ENCODE measurements at regions of chr17 and their contacts with region 1.

Region 1: GRCh38 chr17:68205251-68205807 is 42.5 kb upstream of the AMZ2 start:
- DNase-seq: peak; percentile 81 to 95 (median 92)
- ATAC-seq: peak; percentile 80 to 81
- H3K4me3 Mint-ChIP-seq: peak overlapping the region; percentile 78 to 95 (median 87)
- H3K27ac Mint-ChIP-seq: peak overlapping the region; percentile 43 to 97 (median 91)
- H3K4me1 Mint-ChIP-seq: peaks cover 11 to 43% (median 22%) of the 10 kb centered on the region in 4 donors
- H3K27me3 Mint-ChIP-seq: no peaks in the 10 kb centered on the region

Region 2: DNA sequence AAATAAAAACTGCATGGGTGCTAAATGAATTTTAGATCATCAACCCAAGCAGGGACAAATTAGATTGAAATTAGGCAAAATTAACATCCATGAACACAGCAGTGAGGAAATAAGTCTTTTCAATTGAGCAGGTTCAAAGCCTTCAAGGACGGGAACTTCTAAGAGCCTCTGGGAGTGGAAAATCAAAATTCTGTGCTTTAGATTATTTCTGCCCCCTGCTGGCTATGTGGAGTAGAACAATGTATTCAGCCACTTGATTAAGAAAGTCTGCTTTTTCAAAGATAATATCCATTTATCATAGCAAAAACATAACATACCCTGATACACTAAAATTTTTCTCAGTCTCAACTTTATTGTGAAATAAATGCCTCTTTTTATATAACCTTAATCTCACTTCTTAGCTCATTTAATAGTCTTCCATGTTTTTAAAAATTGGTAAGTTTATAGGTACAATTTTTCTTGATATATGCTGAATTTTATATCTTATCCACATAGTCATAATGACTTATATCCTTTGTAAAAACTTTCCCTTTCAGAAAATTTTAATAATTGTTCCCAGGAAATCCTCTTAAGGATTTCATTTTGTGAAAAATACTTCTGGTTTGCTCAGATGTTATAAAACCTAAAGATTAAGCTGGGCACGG is 515.7 kb before region 1 on chr17:
- POLR2A ChIA-PET with region 1: no interaction called
- DNase-seq: peak; percentile 7 to 69 (median 52)
- ATAC-seq: peak; percentile 66 to 68
- H3K4me3 Mint-ChIP-seq: no peak overlapping the region
- H3K27ac Mint-ChIP-seq: peak overlapping the region in 2 of 10 donors; percentile 21 to 80
- H3K4me1 Mint-ChIP-seq: peaks cover 0 to 7% (median 4%) of the 10 kb centered on the region in 4 donors
- H3K27me3 Mint-ChIP-seq: no peaks in the 10 kb centered on the region

Region 3: GRCh38 chr17:68133346-68134045 is 71.8 kb before region 1 on chr17:
- POLR2A ChIA-PET with region 1: no interaction called
- DNase-seq: no peak
- ATAC-seq: no peak
- H3K4me3 Mint-ChIP-seq: no peak overlapping the region
- H3K27ac Mint-ChIP-seq: peak overlapping the region in 3 of 10 donors; percentile 37 to 83 (median 52)
- H3K4me1 Mint-ChIP-seq: no peaks in the 10 kb centered on the region
- H3K27me3 Mint-ChIP-seq: peaks cover 0 to 2% (median 0%) of the 10 kb centered on the region in 5 donors

Region 4: DNA sequence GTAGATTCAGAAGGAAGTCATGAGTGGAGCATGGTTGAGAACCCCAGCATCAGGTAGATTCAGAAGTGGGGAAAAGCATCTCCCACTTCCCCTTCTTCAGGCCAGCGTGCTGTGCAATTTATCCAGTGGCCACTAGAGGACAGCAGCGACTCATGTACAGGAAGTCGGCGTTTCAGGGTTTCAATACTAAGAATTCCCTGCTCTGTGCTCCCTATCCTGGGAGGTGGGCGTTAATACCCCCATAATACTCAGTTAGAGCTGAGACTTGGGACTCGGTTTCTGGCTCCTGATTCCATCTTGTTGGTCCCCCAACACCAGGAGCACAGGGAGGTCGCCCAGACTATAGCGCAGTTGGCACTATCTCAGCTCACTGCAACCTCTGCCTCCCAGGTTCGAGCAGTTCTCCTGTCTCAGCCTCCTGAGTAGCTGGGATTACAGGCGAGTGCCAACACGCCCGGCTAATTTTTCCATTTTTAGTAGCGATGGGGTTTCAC is 32.8 kb before region 1 on chr17:
- POLR2A ChIA-PET with region 1: interaction called, 12 read pairs
- DNase-seq: peak; percentile 57 to 84 (median 70)
- ATAC-seq: peak; percentile 71 to 74
- H3K4me3 Mint-ChIP-seq: no peak overlapping the region
- H3K27ac Mint-ChIP-seq: no peak overlapping the region
- H3K4me1 Mint-ChIP-seq: peaks cover 16 to 37% (median 32%) of the 10 kb centered on the region in 4 donors
- H3K27me3 Mint-ChIP-seq: no peaks in the 10 kb centered on the region

Region 5: GRCh38 chr17:68184816-68185436 is 20.4 kb before region 1 on chr17:
- POLR2A ChIA-PET with region 1: interaction called, 224 read pairs
- DNase-seq: peak in 5 of 10 donors; percentile 41 to 63 (median 58)
- ATAC-seq: peak; percentile 76 to 79
- H3K4me3 Mint-ChIP-seq: peak overlapping the region; percentile 45 to 94 (median 64)
- H3K27ac Mint-ChIP-seq: peak overlapping the region; percentile 57 to 94 (median 86)
- H3K4me1 Mint-ChIP-seq: peaks cover 19 to 71% (median 52%) of the 10 kb centered on the region in 4 donors
- H3K27me3 Mint-ChIP-seq: no peaks in the 10 kb centered on the region

Region 6: GRCh38 chr17:68238164-68238872 is 33.0 kb after region 1 on chr17:
- POLR2A ChIA-PET with region 1: interaction called, 45 read pairs
- DNase-seq: peak in 6 of 10 donors; percentile 10 to 45 (median 29)
- ATAC-seq: peak; percentile 18 to 51
- H3K4me3 Mint-ChIP-seq: peak overlapping the region; percentile 82 to 89 (median 84)
- H3K27ac Mint-ChIP-seq: peak overlapping the region; percentile 94 to 99 (median 98)
- H3K4me1 Mint-ChIP-seq: peaks cover 19 to 64% (median 37%) of the 10 kb centered on the region in 4 donors
- H3K27me3 Mint-ChIP-seq: no peaks in the 10 kb centered on the region